ENCODE measurements at regions of chr11 and their contacts with region 1.

Region 1: GRCh38 chr11:128630367-128631230 is 43.2 kb upstream of the ETS1 start:
- DNase-seq: peak; percentile 94
- ATAC-seq: peak; percentile 71
- H3K4me3 Mint-ChIP-seq: peak overlapping the region; percentile 72
- H3K27ac Mint-ChIP-seq: peak overlapping the region; percentile 97
- H3K4me1 Mint-ChIP-seq: peaks cover 66% of the 10 kb centered on the region
- H3K27me3 Mint-ChIP-seq: no peaks in the 10 kb centered on the region
- CTCF ChIP-seq: peak; percentile 72

Region 2: GRCh38 chr11:128180446-128181087 is 450.0 kb before region 1 on chr11:
- CTCF ChIA-PET with region 1: interaction called, 139 read pairs
- POLR2A ChIA-PET with region 1: interaction called, 3 read pairs
- intact Hi-C with region 1: no loop called
- DNase-seq: no peak
- ATAC-seq: no peak
- H3K4me3 Mint-ChIP-seq: no peak overlapping the region
- H3K27ac Mint-ChIP-seq: no peak overlapping the region
- H3K4me1 Mint-ChIP-seq: peaks cover 23% of the 10 kb centered on the region
- H3K27me3 Mint-ChIP-seq: no peaks in the 10 kb centered on the region
- CTCF ChIP-seq: no peak

Region 3: GRCh38 chr11:128302425-128303186 is 328.0 kb before region 1 on chr11:
- CTCF ChIA-PET with region 1: interaction called, 17 read pairs
- POLR2A ChIA-PET with region 1: no interaction called
- intact Hi-C with region 1: no loop called
- DNase-seq: peak; percentile 80
- ATAC-seq: peak; percentile 90
- H3K4me3 Mint-ChIP-seq: peak overlapping the region; percentile 85
- H3K27ac Mint-ChIP-seq: peak overlapping the region; percentile 90
- H3K4me1 Mint-ChIP-seq: peaks cover 79% of the 10 kb centered on the region
- H3K27me3 Mint-ChIP-seq: no peaks in the 10 kb centered on the region
- CTCF ChIP-seq: peak; percentile 14

Region 4: DNA sequence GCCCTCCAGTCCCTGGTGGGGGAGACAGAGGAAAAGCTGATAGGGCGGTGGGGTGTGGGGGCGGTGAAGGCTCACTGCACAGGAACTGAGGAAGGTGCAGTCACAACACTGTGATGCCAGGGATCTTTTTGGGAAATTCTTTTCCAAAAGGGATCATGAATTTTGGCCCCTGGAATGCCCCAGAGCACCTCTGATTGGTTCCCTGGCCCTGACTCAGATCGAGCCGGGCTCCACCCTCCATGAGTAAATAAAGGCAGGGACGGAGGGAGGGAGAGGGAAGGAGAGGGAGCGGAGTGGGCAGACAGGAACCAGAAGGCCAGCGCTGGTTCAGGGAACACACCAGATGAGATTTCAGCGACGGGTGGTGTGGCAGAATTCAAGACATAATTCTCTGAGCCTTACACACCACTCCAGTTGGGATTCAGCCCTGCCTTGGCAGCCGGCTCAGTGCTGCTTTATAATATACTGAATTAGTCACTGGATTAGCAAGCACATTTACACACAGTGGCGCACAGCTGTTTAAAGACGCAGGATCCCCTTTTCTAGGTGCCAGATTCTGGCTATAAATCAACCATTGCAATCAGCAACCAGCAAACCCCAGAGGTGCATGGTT is 123.5 kb before region 1 on chr11:
- CTCF ChIA-PET with region 1: interaction called, 400 read pairs
- POLR2A ChIA-PET with region 1: interaction called, 34 read pairs
- intact Hi-C with region 1: no loop called
- DNase-seq: peak; percentile 77
- ATAC-seq: peak; percentile 32
- H3K4me3 Mint-ChIP-seq: peak overlapping the region; percentile 95
- H3K27ac Mint-ChIP-seq: peak overlapping the region; percentile 96
- H3K4me1 Mint-ChIP-seq: peaks cover 86% of the 10 kb centered on the region
- H3K27me3 Mint-ChIP-seq: no peaks in the 10 kb centered on the region
- CTCF ChIP-seq: no peak

Region 5: GRCh38 chr11:128544471-128545051 is 86.0 kb before region 1 on chr11:
- CTCF ChIA-PET with region 1: interaction called, 17 read pairs
- POLR2A ChIA-PET with region 1: interaction called, 3 read pairs
- intact Hi-C with region 1: no loop called
- DNase-seq: peak; percentile 32
- ATAC-seq: peak; percentile 55
- H3K4me3 Mint-ChIP-seq: peak overlapping the region; percentile 69
- H3K27ac Mint-ChIP-seq: peak overlapping the region; percentile 78
- H3K4me1 Mint-ChIP-seq: peaks cover 56% of the 10 kb centered on the region
- H3K27me3 Mint-ChIP-seq: no peaks in the 10 kb centered on the region
- CTCF ChIP-seq: no peak

Region 6: DNA sequence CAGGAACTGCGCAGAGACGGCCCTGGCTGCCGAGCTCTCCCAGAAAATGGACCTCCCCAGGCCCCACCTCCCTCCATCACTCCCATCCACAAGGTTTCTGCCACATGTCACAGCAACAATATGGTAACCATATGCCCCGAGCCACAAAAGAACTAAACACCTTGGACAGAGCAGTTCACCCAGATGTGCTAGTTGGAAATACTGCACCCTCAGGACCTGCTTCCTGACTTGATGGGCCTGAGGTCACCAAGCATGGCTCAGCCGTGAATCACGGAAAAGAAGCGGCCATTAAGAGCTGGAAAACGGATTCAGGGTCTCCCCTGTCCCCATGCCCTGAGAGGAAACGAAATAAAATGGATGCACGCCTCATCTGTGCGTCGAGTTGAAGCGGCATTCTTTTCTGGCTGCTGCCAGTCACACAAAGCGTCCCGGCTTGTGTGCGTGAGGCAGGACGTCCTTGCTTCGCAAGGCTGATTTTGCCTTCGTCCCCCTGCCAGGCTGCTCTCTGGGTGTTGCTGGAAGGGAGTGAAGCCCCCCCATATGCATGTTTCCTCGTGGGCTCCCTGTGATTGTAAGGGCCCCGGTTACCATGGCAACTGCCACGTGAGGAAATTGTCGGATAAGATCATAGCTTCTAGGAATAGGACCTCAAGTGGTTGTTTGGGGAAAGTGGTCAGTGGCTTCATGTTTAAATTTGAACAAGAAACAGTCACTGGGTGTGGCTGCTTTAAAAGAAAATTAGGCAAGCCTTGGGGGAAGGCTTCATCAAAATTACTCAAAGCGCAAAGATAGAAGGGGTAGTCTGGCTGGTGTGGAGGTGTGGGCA is 114.9 kb after region 1 on chr11:
- CTCF ChIA-PET with region 1: no interaction called
- POLR2A ChIA-PET with region 1: no interaction called
- intact Hi-C with region 1: no loop called
- DNase-seq: no peak
- ATAC-seq: no peak
- H3K4me3 Mint-ChIP-seq: no peak overlapping the region
- H3K27ac Mint-ChIP-seq: no peak overlapping the region
- H3K4me1 Mint-ChIP-seq: peaks cover 78% of the 10 kb centered on the region
- H3K27me3 Mint-ChIP-seq: no peaks in the 10 kb centered on the region
- CTCF ChIP-seq: no peak

Region 7: DNA sequence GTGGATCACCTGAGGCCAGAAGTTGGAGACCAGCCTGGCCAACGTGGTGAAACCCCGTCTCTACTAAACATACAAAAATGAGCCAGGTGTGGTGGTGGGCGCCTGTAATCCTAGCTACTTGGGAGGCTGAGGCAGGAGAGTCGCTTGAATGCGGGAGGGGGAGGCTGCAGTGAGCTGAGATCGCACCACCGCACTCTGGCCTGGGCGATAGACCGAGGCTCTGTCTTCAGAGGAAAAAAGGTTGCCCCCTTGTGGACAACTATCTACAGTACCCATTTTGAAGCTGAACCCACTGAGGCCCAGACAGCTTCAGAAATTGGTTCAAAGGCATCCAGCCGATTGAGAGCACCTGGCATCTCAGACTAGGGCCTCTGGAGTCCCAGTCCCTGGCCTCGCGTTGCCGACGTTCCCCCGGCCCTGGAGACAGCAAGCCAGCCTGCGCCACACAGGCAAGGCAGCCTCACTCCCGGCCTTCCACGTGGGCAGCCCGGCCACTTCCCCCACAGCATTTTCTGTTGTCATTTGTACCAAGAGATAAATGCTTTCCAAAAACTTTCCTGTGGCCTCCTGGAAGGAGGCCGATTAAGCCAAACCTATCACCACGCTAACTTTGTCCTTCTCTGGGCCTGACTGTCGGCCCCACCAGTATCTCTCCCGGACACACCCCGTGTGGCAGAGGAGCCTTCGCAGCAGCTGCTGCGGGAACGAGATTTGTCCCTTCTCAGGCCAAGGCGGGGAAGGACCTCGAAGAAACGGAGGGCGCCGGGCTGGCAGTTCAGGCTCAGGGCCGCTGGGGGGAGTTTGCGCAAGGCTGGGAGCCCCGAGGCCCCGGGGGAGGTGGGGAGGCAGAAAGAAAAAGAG is 146.1 kb after region 1 on chr11:
- CTCF ChIA-PET with region 1: interaction called, 17 read pairs
- POLR2A ChIA-PET with region 1: no interaction called
- intact Hi-C with region 1: no loop called
- DNase-seq: peak; percentile 47
- ATAC-seq: peak; percentile 68
- H3K4me3 Mint-ChIP-seq: no peak overlapping the region
- H3K27ac Mint-ChIP-seq: peak overlapping the region; percentile 71
- H3K4me1 Mint-ChIP-seq: peaks cover 40% of the 10 kb centered on the region
- H3K27me3 Mint-ChIP-seq: no peaks in the 10 kb centered on the region
- CTCF ChIP-seq: peak; percentile 49

Measured in activated CD8-positive, alpha-beta T cell treated with anti-CD3 and anti-CD28 coated beads for 36 hours (primary cell).